Dorsolateral prefrontal cortex (tissue), 120 donors: ENCODE measurements at regions of chr3 and their contacts with region 1.

Region 1: DNA sequence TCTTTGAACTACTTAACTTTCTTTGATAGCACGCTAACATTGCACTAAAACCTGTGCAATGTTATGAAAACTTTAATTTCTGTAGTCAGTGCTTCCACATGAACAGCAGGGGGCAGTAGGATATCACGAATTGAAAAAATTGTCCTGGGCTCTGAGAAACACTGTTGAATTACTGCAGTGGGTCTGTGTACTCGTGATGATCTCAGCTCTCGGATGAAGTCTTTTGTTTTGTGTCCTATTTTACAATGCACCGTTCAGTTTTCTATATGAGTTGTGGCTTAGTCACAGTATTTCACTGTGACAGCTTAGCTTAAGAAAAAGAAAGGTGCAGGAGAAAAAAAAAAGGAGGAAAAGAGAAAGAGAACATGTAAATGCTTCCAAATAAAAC is 141.3 kb upstream of the CCDC54 start:
- DNase-seq: peak in 4 of 10 donors; percentile 41 to 70 (median 51)
- H3K4me3 ChIP-seq: peak overlapping the region; percentile 30 to 76 (median 57)
- H3K27ac ChIP-seq: peak overlapping the region; percentile 49 to 99 (median 95)
- H3K27me3 ChIP-seq: no peaks in the 10 kb centered on the region
- CTCF ChIP-seq: peak; percentile 88 to 100 (median 94)

Region 2: GRCh38 chr3:107271787-107272387 is 36.0 kb after region 1 on chr3:
- intact Hi-C with region 1: loop called (anchors 1 to 2 kb)
- DNase-seq: no peak
- H3K4me3 ChIP-seq: peak overlapping the region in 11 of 59 donors; percentile 4 to 39 (median 18)
- H3K27ac ChIP-seq: peak overlapping the region in 58 of 59 donors; percentile 1 to 90 (median 72)
- H3K27me3 ChIP-seq: no peaks in the 10 kb centered on the region
- CTCF ChIP-seq: peak; percentile 63 to 94 (median 82)

Region 3: GRCh38 chr3:107522510-107523288 is 286.8 kb after region 1 on chr3 and contains the start of gene BBX:
- intact Hi-C with region 1: loop called in 1 of 2 experiments (anchors 2 kb)
- DNase-seq: peak; percentile 89 to 99 (median 94)
- H3K4me3 ChIP-seq: peak within 1 kb of the TSS; percentile 65 to 94 (median 84)
- H3K27ac ChIP-seq: peak within 1 kb of the TSS; percentile 81 to 99 (median 96)
- H3K27me3 ChIP-seq: no peaks in the 10 kb centered on the region
- CTCF ChIP-seq: peak in 16 of 56 donors; percentile 3 to 44 (median 18)
- total RNA-seq, gene BBX: 42.2 to 147 (median 75.3) TPM

Region 4: DNA sequence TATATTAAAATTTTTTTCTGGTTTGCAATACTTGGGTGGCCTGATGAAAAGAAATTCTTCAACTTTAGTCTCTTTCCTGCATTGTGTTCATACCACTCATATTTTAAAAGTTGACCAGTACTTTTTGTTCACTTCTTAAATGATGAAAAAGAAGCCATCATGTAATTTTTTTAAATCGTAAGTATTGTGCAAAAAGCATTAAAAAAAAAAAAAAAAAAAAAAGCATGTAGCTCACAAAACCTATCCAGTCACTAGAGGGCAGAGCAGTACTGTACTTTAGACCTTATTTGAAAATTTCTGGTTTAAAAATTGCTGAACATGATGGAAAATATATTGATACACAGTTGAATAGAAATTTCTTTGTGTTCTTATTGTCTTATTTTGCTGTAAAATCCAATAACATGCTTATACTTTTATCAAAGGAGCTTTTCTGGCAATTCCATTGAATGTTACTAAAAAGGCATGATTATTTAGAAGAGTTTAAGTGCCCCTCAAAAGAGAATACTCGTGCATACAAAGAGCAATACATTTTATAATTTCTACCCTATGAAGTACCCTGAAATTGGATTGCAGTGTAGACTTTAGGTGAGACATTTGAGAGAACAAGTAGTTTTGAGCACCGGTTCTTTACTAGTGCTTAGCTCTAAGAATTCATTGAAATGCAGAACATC is 424.5 kb after region 1 on chr3:
- intact Hi-C with region 1: loop called (anchors 10 kb)
- DNase-seq: no peak
- H3K4me3 ChIP-seq: peak overlapping the region in 10 of 59 donors; percentile 1 to 24 (median 12)
- H3K27ac ChIP-seq: no peak overlapping the region
- H3K27me3 ChIP-seq: no peaks in the 10 kb centered on the region
- CTCF ChIP-seq: peak; percentile 49 to 84 (median 70)

Region 5: GRCh38 chr3:108477511-108478147 is 1241.7 kb after region 1 on chr3:
- intact Hi-C with region 1: loop called (anchors 10 kb)
- DNase-seq: peak in 5 of 10 donors; percentile 17 to 50 (median 35)
- H3K4me3 ChIP-seq: peak overlapping the region in 23 of 59 donors; percentile 4 to 49 (median 20)
- H3K27ac ChIP-seq: no peak overlapping the region
- H3K27me3 ChIP-seq: no peaks in the 10 kb centered on the region
- CTCF ChIP-seq: peak; percentile 49 to 89 (median 76)